ENCODE measurements at regions of chr3 and their contacts with region 1.

Region 1: DNA sequence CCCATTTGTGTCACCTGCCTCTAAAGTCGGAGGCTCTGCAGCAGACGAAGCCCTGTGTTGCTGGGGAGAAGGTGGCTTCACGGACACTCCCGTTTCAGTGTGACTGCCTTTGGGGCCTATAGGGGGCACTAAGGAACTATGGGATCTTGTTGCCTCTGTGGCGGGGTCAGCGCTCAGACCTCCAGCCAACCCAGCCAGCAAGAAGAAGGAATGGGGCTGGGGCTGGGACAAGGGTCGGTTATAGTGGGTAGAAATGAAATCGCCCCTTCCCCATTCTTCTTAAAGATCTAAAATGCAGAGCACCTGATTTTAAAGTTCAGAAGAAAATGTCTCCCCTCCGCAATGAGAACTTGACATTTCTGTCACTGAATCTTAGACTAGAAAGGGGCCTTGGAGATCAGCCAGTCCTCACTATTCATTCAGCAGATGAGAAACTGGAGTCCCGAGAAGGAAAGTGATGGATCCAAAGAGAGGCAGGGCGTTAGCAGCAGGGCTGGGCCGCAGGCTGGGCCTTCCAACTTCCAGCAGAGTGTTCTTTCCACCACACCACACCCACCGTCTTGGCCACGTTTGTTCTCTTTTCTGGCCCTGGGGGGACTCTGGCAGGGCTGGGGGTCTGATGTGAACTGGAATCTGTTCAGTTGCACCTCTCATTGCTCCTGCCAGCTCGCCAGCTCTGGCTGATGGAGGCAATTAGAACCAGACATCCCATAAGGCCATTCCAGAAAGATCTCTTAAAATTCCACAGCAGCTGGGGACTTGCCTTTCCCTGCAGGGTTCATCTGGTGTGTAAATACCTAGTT is 195.4 kb downstream of the OPA1 start:
- DNase-seq: peak; percentile 41 to 42
- H3K4me3 ChIP-seq: no peak overlapping the region
- H3K27ac ChIP-seq: no peak overlapping the region
- H3K4me1 ChIP-seq: no peaks in the 10 kb centered on the region
- H3K27me3 ChIP-seq: no peaks in the 10 kb centered on the region
- CTCF ChIP-seq: peak; percentile 33 to 55 (median 48)
- POLR2A ChIP-seq: no peak

Region 2: DNA sequence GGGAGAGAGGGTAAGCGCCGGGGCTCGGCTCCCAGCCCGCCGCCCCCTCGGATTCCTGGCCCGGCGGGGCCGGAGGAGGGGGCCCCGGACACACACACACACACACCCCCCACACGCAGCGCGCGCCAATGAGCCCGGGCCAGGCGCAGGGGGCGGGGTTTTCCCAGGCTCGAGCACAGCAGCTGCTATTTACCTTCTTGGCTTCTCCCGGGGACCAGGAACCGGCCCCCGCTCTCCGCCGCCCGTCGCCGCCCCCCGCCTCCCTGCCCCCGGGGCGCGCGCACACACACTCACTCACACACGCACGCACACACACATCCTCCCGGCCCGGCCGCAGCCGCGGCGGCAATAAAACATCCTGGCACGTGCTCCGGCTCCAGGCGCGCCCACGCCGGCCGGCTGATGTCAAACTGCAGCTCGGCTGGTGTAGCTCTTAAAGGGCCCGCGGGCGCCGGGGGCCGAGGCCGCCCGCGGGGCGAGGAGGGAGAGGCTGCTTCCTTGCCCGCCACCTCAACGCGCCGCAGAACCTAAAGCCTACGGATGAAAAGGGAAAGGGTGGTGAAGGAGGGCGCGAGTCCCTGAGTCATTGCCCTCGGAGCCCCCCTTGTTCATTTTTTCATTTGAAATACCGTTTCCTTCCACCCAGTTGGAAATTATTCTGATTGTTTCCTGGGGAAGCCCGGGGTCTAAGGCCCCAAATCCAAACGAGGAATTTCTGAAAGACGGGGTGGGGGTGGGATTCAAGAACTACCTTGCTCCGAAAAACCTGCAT is 346.6 kb after region 1 on chr3:
- intact Hi-C with region 1: loop called (anchors 10 kb)
- DNase-seq: peak; percentile 93 to 96
- H3K4me3 ChIP-seq: peak overlapping the region; percentile 58 to 63
- H3K27ac ChIP-seq: peak overlapping the region; percentile 88 to 99
- H3K4me1 ChIP-seq: peaks cover 4 to 9% of the 10 kb centered on the region in 2 donors
- H3K27me3 ChIP-seq: no peaks in the 10 kb centered on the region
- CTCF ChIP-seq: peak in 1 of 4 experiments; percentile 11
- POLR2A ChIP-seq: peak in 1 of 2 donors; percentile 44

Region 3: GRCh38 chr3:194255252-194256039 is 467.1 kb after region 1 on chr3:
- intact Hi-C with region 1: no loop called
- DNase-seq: peak in 1 of 2 donors; percentile 63
- H3K4me3 ChIP-seq: no peak overlapping the region
- H3K27ac ChIP-seq: no peak overlapping the region
- H3K4me1 ChIP-seq: peaks cover 0 to 5% of the 10 kb centered on the region in 2 donors
- H3K27me3 ChIP-seq: no peaks in the 10 kb centered on the region
- CTCF ChIP-seq: no peak
- POLR2A ChIP-seq: no peak